Activated CD4-positive, alpha-beta memory T cell treated with anti-CD3 and anti-CD28 coated beads, Interleukin-2, amount 10 ng/mL, durations not matched to agents 7 days and 5 days (primary cell): ENCODE measurements at regions of chr11 and their contacts with region 1.

Region 1: DNA sequence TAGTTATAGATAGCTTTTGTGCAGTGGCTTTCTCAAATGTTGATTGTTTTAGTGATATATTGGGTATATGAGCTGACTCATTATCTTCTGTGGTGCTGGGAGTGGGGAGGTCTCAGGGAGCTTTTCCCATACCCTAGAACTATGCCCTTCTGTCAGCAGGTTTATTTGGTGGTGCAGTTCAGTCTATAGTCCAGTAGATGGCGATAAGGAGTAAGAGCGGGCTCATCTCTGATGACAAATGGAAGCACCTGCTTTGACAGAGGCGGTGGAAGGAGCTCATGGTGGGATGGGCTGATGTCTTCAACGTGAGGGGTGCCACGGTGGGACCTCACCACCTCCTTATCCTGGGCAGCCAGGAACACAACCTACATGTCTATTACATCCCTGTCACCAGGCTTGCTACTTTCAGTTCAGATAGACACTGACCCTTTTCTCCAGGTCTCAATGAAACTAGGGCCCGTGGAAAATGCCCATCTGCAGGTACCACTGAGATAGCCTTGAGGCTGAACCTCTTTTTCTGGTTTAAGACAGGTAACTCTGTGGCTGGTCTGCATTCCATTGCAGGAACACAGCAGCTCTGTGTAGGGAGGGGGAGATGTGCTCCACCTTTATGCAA is 13.0 kb upstream of the OR6A2 start:
- DNase-seq: peak; percentile 27
- H3K4me3 Mint-ChIP-seq: no peak overlapping the region
- H3K27ac Mint-ChIP-seq: no peak overlapping the region
- H3K4me1 Mint-ChIP-seq: no peaks in the 10 kb centered on the region
- H3K27me3 Mint-ChIP-seq: peaks cover 30% of the 10 kb centered on the region

Region 2: DNA sequence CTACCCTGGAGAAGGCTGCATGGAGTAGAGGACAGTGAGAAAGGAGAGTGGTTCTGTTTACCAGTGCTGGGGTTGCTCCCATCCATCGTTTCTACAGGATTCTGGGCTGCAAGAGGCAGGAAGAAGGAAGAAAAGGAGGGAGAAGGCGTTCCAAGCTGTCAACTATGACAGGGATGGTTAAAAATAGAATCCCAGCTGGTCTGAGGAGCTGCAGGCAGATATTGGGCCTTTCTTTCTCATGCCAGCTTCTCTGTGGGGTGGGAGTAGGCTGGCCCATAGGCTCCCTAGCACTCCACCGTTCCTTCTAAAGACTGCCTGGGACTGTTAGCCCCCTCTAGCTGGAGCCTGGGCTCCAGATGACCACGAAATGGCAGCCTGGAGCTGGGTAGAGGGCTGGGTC is 539.3 kb before region 1 on chr11:
- CTCF ChIA-PET with region 1: no interaction called
- POLR2A ChIA-PET with region 1: no interaction called
- DNase-seq: no peak
- H3K4me3 Mint-ChIP-seq: no peak overlapping the region
- H3K27ac Mint-ChIP-seq: no peak overlapping the region
- H3K4me1 Mint-ChIP-seq: peaks cover 4% of the 10 kb centered on the region
- H3K27me3 Mint-ChIP-seq: peaks cover 46% of the 10 kb centered on the region

Region 3: DNA sequence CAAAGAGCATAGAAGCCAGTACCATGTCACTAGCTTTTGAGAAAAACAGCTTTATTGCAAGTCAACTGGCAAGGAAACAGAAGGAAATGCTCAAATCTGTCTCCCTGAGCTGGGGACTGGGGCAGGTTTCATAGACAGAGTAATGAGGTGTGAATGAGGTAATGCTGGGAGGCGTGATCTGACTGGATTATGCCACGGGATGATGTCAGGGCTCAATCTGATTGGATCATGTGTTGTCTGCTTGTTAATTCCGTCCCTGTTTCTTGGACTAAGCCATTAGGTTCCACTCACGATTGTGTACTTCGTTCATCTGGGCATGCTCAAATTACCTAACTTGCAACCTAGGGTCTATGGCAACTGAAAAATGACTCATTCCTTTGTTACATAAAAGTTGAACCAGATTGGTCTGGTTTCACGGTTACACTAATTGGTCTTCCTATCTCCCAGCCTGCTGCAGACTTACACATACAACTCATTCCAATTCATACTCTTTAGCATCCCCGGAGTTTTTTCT is 12.8 kb after region 1 on chr11:
- CTCF ChIA-PET with region 1: interaction called, 12 read pairs
- POLR2A ChIA-PET with region 1: no interaction called
- DNase-seq: no peak
- H3K4me3 Mint-ChIP-seq: no peak overlapping the region
- H3K27ac Mint-ChIP-seq: no peak overlapping the region
- H3K4me1 Mint-ChIP-seq: no peaks in the 10 kb centered on the region
- H3K27me3 Mint-ChIP-seq: peaks cover 9% of the 10 kb centered on the region